ENCODE measurements at regions of chr1 and their contacts with region 1.

Region 1: DNA sequence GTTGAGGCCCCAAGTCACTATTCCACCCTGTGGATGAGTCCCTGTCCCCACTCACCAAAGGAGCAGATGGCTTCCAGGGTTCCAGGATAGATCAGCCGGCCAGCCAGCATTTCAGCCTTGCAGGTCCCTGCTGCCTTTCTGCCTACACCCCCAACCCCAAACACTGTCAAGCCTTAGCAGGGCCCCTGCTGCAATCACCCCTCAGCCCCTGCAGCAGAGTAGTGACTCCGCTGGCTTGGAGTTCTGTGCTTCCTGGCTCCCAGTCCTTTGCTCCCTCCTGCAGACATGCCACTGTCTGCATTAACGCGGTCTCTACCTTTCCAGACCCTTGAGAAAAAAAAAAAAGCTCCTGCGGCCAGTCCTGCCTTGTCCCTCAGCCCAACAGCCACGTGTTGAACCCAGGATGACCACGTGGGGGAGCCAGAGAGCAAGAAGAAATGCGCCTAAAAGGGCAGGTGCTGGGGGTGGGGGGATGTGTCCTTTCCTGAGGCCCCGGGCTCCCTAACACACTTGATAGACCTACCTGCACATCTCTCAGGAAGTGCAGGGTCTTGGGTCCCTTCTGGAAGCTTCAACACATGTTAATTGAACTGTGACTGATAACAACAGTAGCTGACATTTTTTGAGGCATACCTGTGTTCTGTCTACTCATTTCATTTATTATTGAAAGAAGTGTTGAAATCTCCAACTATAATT is 37.4 kb downstream of the RASSF5 start:
- DNase-seq: peak; percentile 86
- H3K4me3 ChIP-seq: no peak overlapping the region; a peak in 1 of 4 replicates
- H3K27ac ChIP-seq: no peak overlapping the region
- H3K4me1 ChIP-seq: no peaks in the 10 kb centered on the region; a peak in 1 of 4 replicates
- H3K27me3 ChIP-seq: no peaks in the 10 kb centered on the region; the same call in 1 of the 2 replicates
- CTCF ChIP-seq: peak; percentile 86
- EP300 ChIP-seq: no peak
- RAD21 ChIP-seq: peak; percentile 73

Region 2: GRCh38 chr1:205568469-205569361 is 976.0 kb before region 1 on chr1:
- CTCF ChIA-PET with region 1: no interaction called
- POLR2A ChIA-PET with region 1: no interaction called
- DNase-seq: peak; percentile 77
- H3K4me3 ChIP-seq: peak overlapping the region in 1 of 2 experiments; percentile 27; a peak in 1 of 4 replicates
- H3K27ac ChIP-seq: no peak overlapping the region
- H3K4me1 ChIP-seq: peaks cover 0 to 2% of the 10 kb centered on the region in 2 experiments; a peak in 1 of 4 replicates
- H3K27me3 ChIP-seq: peaks cover 69% of the 10 kb centered on the region
- CTCF ChIP-seq: no peak; the same call in 1 of the 2 replicates
- EP300 ChIP-seq: no peak
- RAD21 ChIP-seq: no peak

Region 3: GRCh38 chr1:206112600-206113319 is 431.9 kb before region 1 on chr1:
- CTCF ChIA-PET with region 1: no interaction called
- POLR2A ChIA-PET with region 1: no interaction called
- DNase-seq: no peak
- H3K4me3 ChIP-seq: no peak overlapping the region
- H3K27ac ChIP-seq: no peak overlapping the region
- H3K4me1 ChIP-seq: peaks cover 0 to 7% of the 10 kb centered on the region in 2 experiments; a peak in 1 of 4 replicates
- H3K27me3 ChIP-seq: peaks cover 40% of the 10 kb centered on the region
- CTCF ChIP-seq: no peak
- EP300 ChIP-seq: no peak
- RAD21 ChIP-seq: no peak

Region 4: GRCh38 chr1:206496131-206496793 is 48.4 kb before region 1 on chr1:
- CTCF ChIA-PET with region 1: interaction called, 39 read pairs
- POLR2A ChIA-PET with region 1: no interaction called
- DNase-seq: no peak
- H3K4me3 ChIP-seq: no peak overlapping the region
- H3K27ac ChIP-seq: no peak overlapping the region; a peak in 1 of 4 replicates
- H3K4me1 ChIP-seq: peaks cover 16 to 19% of the 10 kb centered on the region in 2 experiments; a peak in 2 of 4 replicates
- H3K27me3 ChIP-seq: no peaks in the 10 kb centered on the region
- CTCF ChIP-seq: no peak
- EP300 ChIP-seq: no peak
- RAD21 ChIP-seq: no peak

Region 5: GRCh38 chr1:206507284-206508129 is 37.2 kb before region 1 on chr1 and contains the start of gene RASSF5:
- CTCF ChIA-PET with region 1: interaction called, 10 read pairs
- POLR2A ChIA-PET with region 1: no interaction called
- DNase-seq: peak; percentile 77
- H3K4me3 ChIP-seq: peak within 1 kb of the TSS; percentile 64 to 65
- H3K27ac ChIP-seq: no peak within 1 kb of the TSS
- H3K4me1 ChIP-seq: peaks cover 10 to 16% of the 10 kb centered on the region in 2 experiments; a peak in 2 of 4 replicates
- H3K27me3 ChIP-seq: no peaks in the 10 kb centered on the region
- CTCF ChIP-seq: no peak
- EP300 ChIP-seq: no peak
- RAD21 ChIP-seq: no peak
- polyA plus RNA-seq, gene RASSF5: 1.7 and 2.2 TPM in 2 replicates

Region 6: GRCh38 chr1:206556750-206557635 is 12.3 kb after region 1 on chr1:
- CTCF ChIA-PET with region 1: interaction called, 67 read pairs
- POLR2A ChIA-PET with region 1: interaction called, 3 read pairs
- DNase-seq: peak; percentile 87
- H3K4me3 ChIP-seq: peak overlapping the region; percentile 61 to 69
- H3K27ac ChIP-seq: no peak overlapping the region
- H3K4me1 ChIP-seq: peaks cover 0 to 10% of the 10 kb centered on the region in 2 experiments; a peak in 2 of 4 replicates
- H3K27me3 ChIP-seq: no peaks in the 10 kb centered on the region; the same call in 1 of the 2 replicates
- CTCF ChIP-seq: no peak
- EP300 ChIP-seq: peak in 1 of 2 experiments; percentile 11; a peak in 1 of 4 replicates
- RAD21 ChIP-seq: no peak

Region 7: GRCh38 chr1:206563367-206564207 is 18.9 kb after region 1 on chr1:
- CTCF ChIA-PET with region 1: interaction called, 67 read pairs
- POLR2A ChIA-PET with region 1: no interaction called
- DNase-seq: no peak
- H3K4me3 ChIP-seq: no peak overlapping the region
- H3K27ac ChIP-seq: no peak overlapping the region
- H3K4me1 ChIP-seq: no peaks in the 10 kb centered on the region
- H3K27me3 ChIP-seq: no peaks in the 10 kb centered on the region
- CTCF ChIP-seq: no peak
- EP300 ChIP-seq: no peak
- RAD21 ChIP-seq: no peak

Region 8: DNA sequence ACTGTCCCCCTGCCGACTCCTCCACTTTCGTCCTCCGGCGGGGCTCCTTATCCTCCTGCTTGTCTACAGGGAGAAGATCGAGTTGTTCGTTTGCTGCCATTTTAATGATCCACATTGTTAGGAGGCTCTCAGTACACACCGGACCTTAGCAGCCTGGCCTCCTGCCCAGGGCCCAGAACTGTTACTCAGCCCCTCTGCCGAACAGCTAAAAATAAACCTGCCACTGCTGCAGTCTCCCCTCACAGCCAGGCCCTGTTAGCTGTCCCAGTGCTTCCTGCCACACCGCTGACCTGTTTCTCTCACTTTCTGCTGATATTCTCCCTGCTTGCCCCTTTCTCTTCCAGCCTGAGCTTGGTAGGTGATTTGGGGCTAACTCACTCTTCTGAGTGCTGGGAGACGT is 148.3 kb after region 1 on chr1:
- CTCF ChIA-PET with region 1: no interaction called
- POLR2A ChIA-PET with region 1: no interaction called
- DNase-seq: no peak
- H3K4me3 ChIP-seq: no peak overlapping the region
- H3K27ac ChIP-seq: peak overlapping the region; percentile 45 to 69
- H3K4me1 ChIP-seq: peaks cover 43 to 51% of the 10 kb centered on the region in 2 experiments
- H3K27me3 ChIP-seq: no peaks in the 10 kb centered on the region
- CTCF ChIP-seq: no peak
- EP300 ChIP-seq: no peak
- RAD21 ChIP-seq: no peak

Region 9: DNA sequence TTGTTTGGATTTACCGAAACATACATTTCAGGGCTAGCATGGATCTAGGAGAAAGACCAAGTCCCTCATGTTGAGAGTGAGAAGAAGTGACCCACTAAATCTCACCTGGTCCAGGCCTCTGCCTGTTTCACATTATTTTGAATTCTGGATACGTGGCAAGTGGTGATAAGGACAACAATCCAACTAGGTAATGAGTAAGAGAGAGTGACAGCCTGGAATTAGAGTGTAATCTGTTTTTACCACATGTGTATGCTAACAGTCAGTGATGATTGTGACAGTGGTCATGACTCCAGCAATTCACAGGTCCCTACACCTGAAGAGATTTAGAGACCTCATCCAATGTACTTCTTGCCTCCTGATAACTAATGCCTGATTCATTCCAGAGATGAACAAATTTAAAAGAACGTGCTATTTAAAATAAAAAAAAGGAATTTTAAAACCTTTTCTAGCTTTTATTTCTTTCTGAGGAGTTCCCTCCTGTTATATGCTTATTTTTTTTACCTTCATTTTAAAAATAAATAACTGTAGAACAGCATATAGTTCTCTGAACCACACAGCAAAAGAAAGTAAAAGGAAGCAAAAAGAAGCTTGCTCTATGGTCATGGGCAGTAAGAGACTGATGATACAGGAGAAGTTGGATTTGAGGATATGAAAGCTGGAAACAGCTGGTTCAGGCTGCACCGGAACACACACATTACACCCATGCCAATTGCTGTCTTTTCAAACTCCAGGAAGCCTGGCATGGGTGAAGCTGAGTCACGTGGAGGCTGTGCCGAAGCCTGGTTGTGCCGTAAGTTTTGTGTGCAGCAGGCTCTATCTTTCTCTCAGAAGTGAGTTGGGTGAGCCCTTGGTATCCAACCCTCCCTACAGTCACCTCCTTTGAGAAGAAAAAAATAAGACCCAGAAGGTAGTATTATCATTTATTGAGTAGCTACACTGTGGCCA is 473.2 kb after region 1 on chr1:
- CTCF ChIA-PET with region 1: no interaction called
- POLR2A ChIA-PET with region 1: no interaction called
- DNase-seq: no peak
- H3K4me3 ChIP-seq: no peak overlapping the region
- H3K27ac ChIP-seq: no peak overlapping the region
- H3K4me1 ChIP-seq: peaks cover 0 to 8% of the 10 kb centered on the region in 2 experiments; a peak in 2 of 4 replicates
- H3K27me3 ChIP-seq: no peaks in the 10 kb centered on the region
- CTCF ChIP-seq: no peak
- EP300 ChIP-seq: no peak
- RAD21 ChIP-seq: no peak

Measured in SK-N-SH (cell line).